ENCODE measurements at regions of chr10 and their contacts with region 1.

Region 1: DNA sequence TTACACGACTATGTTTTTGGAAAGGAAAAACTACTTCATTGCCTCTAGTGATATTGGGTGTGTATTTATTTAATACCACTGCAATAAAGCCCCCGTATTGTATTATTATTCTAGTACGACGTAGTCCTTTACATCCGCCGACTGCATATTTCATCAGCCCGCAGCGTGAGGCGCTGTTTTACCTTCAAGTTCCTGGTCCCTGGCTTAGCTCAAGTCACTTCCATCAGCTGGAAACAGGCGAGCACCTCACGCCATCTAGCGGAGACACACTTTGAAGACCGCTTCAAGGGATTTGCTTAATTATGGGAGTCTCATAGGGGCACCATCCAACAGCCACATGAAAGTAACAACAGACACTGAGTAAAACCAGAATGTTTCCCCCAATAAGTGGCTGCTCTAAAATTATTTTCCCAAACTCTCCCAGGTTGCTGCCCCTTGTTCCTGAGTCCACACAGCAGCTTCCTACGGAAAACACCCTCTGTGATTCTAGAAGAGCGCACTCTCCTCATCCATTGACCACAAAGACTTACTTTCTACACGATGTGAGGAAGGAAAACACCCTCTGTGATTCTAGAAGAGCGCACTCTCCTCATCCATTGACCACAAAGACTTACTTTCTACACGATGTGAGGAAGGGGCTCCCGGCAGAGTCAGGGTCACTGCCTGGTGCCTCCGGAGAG is 15.7 kb upstream of the ITIH2 start:
- DNase-seq: peak; percentile 78
- H3K4me3 ChIP-seq: peak overlapping the region in 1 of 2 experiments; percentile 48; a peak in 1 of 4 replicates
- H3K27ac ChIP-seq: no peak overlapping the region
- H3K4me1 ChIP-seq: no peaks in the 10 kb centered on the region
- H3K27me3 ChIP-seq: no peaks in the 10 kb centered on the region
- CTCF ChIP-seq: peak; percentile 80
- EP300 ChIP-seq: no peak
- RAD21 ChIP-seq: peak; percentile 91

Region 2: GRCh38 chr10:7512487-7512886 is 174.9 kb before region 1 on chr10:
- CTCF ChIA-PET with region 1: interaction called, 12 read pairs
- POLR2A ChIA-PET with region 1: no interaction called
- DNase-seq: no peak
- H3K4me3 ChIP-seq: no peak overlapping the region
- H3K27ac ChIP-seq: no peak overlapping the region
- H3K4me1 ChIP-seq: peaks cover 0 to 3% of the 10 kb centered on the region in 2 experiments; a peak in 2 of 4 replicates
- H3K27me3 ChIP-seq: no peaks in the 10 kb centered on the region; the same call in 1 of the 2 replicates
- CTCF ChIP-seq: no peak
- EP300 ChIP-seq: no peak
- RAD21 ChIP-seq: no peak

Region 3: DNA sequence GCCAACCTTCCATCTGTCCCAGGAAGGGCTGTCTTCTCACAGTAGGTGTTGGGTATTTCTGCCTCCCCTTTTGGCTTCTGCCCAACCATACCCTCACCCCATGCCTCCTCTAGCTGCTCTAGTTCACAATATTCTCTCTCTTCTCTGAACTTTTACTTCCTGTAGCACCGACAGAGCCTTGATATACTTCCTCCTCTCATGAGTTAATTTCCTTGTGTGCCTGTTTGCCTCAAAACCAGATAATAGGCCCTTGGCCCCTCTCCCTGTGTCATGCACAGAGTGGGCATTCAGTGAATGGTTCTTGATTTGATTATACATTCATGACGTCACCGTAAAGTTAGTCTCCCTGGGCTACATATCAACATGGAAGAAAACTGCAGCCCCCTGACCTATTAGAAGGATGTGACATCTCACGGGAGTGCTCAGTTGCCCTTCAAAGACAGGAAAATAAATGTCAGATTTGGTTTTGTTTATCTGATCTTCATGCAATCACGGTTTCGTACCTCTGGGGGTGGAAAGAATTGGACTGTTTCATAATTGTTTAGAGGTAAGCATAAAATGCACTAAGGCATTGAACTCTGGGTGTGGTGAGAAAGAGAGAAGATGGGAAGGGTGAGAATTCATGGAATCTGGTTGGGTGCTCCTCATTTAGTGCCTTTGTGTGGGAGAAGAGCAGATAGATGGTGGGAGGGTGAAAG is 148.2 kb before region 1 on chr10:
- CTCF ChIA-PET with region 1: interaction called, 122 read pairs
- POLR2A ChIA-PET with region 1: no interaction called
- DNase-seq: no peak
- H3K4me3 ChIP-seq: no peak overlapping the region
- H3K27ac ChIP-seq: no peak overlapping the region
- H3K4me1 ChIP-seq: peaks cover 0 to 3% of the 10 kb centered on the region in 2 experiments; a peak in 2 of 4 replicates
- H3K27me3 ChIP-seq: no peaks in the 10 kb centered on the region
- CTCF ChIP-seq: no peak
- EP300 ChIP-seq: no peak
- RAD21 ChIP-seq: no peak

Region 4: GRCh38 chr10:7662522-7662921 is 24.8 kb before region 1 on chr10:
- CTCF ChIA-PET with region 1: interaction called, 26 read pairs
- POLR2A ChIA-PET with region 1: no interaction called
- DNase-seq: no peak
- H3K4me3 ChIP-seq: no peak overlapping the region
- H3K27ac ChIP-seq: no peak overlapping the region
- H3K4me1 ChIP-seq: peaks cover 0 to 4% of the 10 kb centered on the region in 2 experiments; a peak in 1 of 4 replicates
- H3K27me3 ChIP-seq: peaks cover 17% of the 10 kb centered on the region
- CTCF ChIP-seq: no peak
- EP300 ChIP-seq: no peak
- RAD21 ChIP-seq: no peak

Region 5: DNA sequence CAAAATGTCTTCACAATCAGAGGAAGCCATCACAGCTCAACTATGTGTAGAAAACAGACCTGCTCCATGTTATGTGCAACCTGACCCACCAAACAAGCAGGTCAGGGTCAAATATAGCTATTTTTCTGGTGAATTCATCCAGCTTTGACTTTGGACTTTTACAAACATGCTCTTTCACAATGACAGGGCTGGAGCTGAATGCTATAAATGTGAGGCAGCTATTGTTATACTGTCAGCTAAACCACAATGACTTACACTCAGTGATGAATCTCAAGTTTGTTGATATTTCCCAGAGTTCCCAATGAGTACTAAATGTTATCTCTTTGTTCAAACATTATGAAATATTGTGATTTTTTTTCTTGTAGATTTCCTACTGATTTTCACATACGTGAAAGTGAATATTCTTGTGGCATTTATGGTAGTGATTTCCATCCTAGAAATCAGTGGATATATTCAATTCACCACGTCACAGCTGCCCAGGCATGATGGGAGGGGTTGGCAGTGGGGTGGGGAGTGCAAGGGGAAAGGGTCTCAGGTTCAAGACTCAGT is 13.3 kb after region 1 on chr10:
- CTCF ChIA-PET with region 1: interaction called, 17 read pairs
- POLR2A ChIA-PET with region 1: no interaction called
- DNase-seq: no peak
- H3K4me3 ChIP-seq: no peak overlapping the region
- H3K27ac ChIP-seq: no peak overlapping the region
- H3K4me1 ChIP-seq: no peaks in the 10 kb centered on the region
- H3K27me3 ChIP-seq: no peaks in the 10 kb centered on the region
- CTCF ChIP-seq: no peak
- EP300 ChIP-seq: no peak
- RAD21 ChIP-seq: no peak

Region 6: GRCh38 chr10:7715515-7715914 is 28.1 kb after region 1 on chr10:
- CTCF ChIA-PET with region 1: interaction called, 13 read pairs
- POLR2A ChIA-PET with region 1: no interaction called
- DNase-seq: no peak
- H3K4me3 ChIP-seq: no peak overlapping the region
- H3K27ac ChIP-seq: no peak overlapping the region
- H3K4me1 ChIP-seq: no peaks in the 10 kb centered on the region
- H3K27me3 ChIP-seq: no peaks in the 10 kb centered on the region; the same call in 1 of the 2 replicates
- CTCF ChIP-seq: no peak
- EP300 ChIP-seq: no peak
- RAD21 ChIP-seq: no peak

Measured in SK-N-SH (cell line).